Heart right ventricle (tissue), 16 donors: ENCODE measurements at regions of chr4 and their contacts with region 1.

Region 1: DNA sequence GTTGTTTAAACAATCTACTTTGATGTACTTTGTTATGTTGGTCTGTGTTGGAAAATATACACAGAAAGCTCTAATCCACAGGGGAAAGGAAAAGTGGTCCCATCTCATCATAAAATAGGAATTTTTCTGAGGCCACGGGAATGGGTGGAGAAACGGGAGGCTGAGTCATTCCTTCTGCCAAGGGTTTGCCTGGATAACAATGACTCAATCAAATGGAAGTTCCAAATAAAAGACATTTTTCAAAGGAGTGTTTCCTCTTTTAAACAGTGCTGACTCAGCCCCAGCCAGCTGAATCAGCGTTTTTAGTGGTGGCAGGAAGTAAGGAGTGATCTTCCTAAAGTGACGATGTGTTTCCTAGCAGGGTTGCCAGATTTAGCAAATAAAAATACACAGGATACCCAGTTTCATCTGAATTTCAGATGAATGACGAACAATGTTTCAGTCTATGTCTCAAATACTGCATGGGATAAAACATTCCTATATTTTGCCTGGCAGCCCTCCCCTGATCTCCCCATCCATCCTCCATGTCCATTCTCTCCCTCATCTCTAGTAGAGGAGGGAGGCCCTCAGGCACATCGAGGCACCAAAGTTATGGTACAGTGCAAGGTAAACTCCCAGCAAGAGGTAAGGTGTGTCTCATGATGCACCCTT is 345.4 kb upstream of the GATB start:
- DNase-seq: peak; percentile 44 to 76
- ATAC-seq: peak in 7 of 8 donors; percentile 29 to 80 (median 58)
- H3K4me3 ChIP-seq: no peak overlapping the region
- H3K27ac ChIP-seq: peak overlapping the region in 6 of 10 donors; percentile 5 to 78 (median 46)
- H3K4me1 ChIP-seq: peaks cover 7 to 66% (median 59%) of the 10 kb centered on the region in 9 donors
- H3K27me3 ChIP-seq: no peaks in the 10 kb centered on the region
- CTCF ChIP-seq: no peak

Region 2: DNA sequence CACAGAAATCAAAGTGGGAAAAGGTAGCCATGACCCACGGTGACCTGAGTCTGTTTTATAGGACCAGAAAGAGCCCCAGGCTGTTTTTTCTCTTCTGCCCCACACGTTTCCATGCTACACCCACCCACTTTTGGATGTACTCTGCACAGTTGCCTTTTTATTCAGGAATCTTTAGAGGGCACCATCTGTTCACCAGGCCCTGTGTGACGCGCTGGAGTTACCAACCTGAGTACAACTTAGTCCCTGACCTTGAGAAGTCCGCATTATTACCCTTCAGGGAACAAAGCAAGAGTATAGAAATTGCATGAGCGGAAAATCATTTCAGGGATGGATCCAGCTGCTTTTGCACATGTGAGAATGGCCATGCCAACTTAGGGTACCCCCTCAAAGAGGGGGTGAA is 137.6 kb before region 1 on chr4:
- intact Hi-C with region 1: no loop called
- DNase-seq: no peak
- ATAC-seq: peak in 4 of 8 donors; percentile 33 to 57 (median 54)
- H3K4me3 ChIP-seq: no peak overlapping the region
- H3K27ac ChIP-seq: no peak overlapping the region
- H3K4me1 ChIP-seq: no peaks in the 10 kb centered on the region
- H3K27me3 ChIP-seq: no peaks in the 10 kb centered on the region
- CTCF ChIP-seq: peak in 1 of 9 donors; percentile 13

Region 3: GRCh38 chr4:152255437-152256011 is 149.3 kb after region 1 on chr4:
- intact Hi-C with region 1: loop called in 1 of 10 experiments (anchors 5 kb)
- DNase-seq: peak in 1 of 2 donors; percentile 20
- ATAC-seq: peak in 4 of 8 donors; percentile 39 to 71 (median 62)
- H3K4me3 ChIP-seq: no peak overlapping the region
- H3K27ac ChIP-seq: peak overlapping the region in 1 of 10 donors; percentile 33
- H3K4me1 ChIP-seq: peaks cover 3 to 40% (median 28%) of the 10 kb centered on the region in 9 donors
- H3K27me3 ChIP-seq: no peaks in the 10 kb centered on the region
- CTCF ChIP-seq: no peak